PC-9 (cell line): ENCODE measurements at regions of chr6 and their contacts with region 1.

Region 1: GRCh38 chr6:2353412-2354137 is 108.2 kb upstream of the GMDS start:
- DNase-seq: peak; percentile 60 to 62
- H3K4me3 ChIP-seq: no peak overlapping the region
- H3K27ac ChIP-seq: no peak overlapping the region
- H3K4me1 ChIP-seq: peaks cover 6% of the 10 kb centered on the region; the same call in 1 of the 2 replicates
- H3K27me3 ChIP-seq: no peaks in the 10 kb centered on the region
- CTCF ChIP-seq: peak; percentile 79

Region 2: DNA sequence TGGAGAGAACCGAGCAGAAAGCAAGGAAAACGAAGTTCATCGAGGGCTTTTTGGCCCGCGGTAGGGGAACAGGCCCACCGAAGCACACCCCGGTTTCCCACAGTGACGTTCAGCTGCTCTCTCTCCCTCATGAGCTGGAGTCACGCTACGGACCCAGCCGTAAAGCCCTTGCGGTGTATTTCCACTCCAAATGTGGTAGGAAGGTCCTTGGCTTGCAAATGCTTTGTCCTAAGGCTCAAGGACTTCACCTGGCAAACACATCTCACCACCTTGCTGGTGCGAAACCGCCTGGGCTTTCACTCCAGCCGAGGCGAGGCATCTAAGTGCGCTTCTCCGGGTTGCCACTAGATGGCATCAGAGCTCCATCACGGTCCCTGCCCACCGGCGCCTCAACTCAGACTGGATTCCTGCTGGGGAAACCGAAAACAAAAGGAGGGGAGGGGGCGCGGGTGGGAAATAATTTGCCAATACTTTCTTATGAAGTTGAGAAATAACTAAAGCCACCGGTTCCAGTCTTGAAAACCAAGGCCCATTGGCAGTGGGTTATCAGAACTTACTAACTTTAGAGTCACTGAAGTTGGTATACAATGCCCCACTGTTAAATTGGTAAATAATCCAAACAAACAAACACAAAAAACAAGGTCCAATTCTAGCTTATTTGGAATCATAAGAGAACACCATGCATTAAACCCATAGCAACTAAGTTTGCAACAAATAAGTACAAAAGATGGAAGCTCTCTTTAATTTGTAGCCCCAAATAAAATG is 757.3 kb before region 1 on chr6:
- CTCF ChIA-PET with region 1: interaction called, 4 read pairs
- POLR2A ChIA-PET with region 1: no interaction called
- intact Hi-C with region 1: loop called (anchors 2 kb)
- DNase-seq: peak; percentile 43 to 61
- H3K4me3 ChIP-seq: no peak overlapping the region
- H3K27ac ChIP-seq: no peak overlapping the region
- H3K4me1 ChIP-seq: no peaks in the 10 kb centered on the region
- H3K27me3 ChIP-seq: no peaks in the 10 kb centered on the region
- CTCF ChIP-seq: peak; percentile 88

Region 3: DNA sequence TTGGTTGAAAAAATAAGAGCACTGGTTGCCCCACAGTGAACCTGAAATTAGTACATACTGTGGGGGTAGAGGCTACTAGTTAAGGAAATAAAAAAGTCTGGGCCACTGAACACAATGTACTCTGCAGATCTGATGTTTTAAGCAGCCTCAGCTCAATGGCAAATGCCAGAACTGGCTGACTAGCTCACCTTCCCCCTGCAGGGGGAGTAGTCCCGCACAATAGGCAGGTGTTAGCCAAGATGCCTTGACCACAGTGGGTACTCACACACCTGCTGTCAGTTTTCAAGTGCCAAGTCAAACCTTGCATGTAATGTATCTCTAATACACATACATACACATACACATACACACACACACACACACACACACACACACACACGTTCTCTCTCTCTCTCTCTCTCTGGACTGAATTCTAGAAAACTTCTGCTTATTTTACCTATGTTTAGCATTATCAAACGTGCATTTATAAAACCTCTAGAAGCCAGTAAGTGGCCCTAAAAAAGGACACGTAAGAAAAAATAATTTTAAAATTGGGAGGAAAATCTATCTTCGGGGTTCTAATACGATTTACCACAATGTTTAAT is 144.3 kb before region 1 on chr6:
- CTCF ChIA-PET with region 1: interaction called, 14 read pairs
- POLR2A ChIA-PET with region 1: no interaction called
- intact Hi-C with region 1: no loop called
- DNase-seq: peak; percentile 38 to 48
- H3K4me3 ChIP-seq: no peak overlapping the region
- H3K27ac ChIP-seq: no peak overlapping the region
- H3K4me1 ChIP-seq: no peaks in the 10 kb centered on the region
- H3K27me3 ChIP-seq: no peaks in the 10 kb centered on the region
- CTCF ChIP-seq: peak; percentile 62